ENCODE measurements at regions of chr15 and their contacts with region 1.

Region 1: DNA sequence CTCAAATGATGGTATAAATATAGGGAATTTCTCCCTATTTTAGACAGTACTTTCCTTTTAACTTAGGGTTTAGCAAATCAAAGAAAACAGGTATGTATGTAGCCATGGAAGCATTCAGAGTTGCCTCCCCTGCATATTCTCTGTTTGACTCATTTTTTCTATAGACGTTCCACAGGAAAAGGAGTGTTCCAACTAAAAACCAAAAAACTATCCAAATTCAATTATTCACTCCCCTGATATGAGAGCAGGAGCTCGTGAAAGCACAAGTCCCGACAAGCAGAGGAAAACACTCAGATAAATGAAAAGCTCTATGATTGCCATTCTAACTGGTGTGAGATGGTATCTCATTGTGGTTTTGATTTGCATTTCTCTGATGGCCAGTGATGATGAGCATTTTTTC is 119.5 kb downstream of the FRMD5 start:
- DNase-seq: no peak
- ATAC-seq: no peak
- H3K4me3 ChIP-seq: no peak overlapping the region
- H3K27ac ChIP-seq: no peak overlapping the region
- H3K4me1 ChIP-seq: no peaks in the 10 kb centered on the region
- H3K27me3 ChIP-seq: no peaks in the 10 kb centered on the region
- CTCF ChIP-seq: no peak
- POLR2A ChIP-seq: no peak

Region 2: DNA sequence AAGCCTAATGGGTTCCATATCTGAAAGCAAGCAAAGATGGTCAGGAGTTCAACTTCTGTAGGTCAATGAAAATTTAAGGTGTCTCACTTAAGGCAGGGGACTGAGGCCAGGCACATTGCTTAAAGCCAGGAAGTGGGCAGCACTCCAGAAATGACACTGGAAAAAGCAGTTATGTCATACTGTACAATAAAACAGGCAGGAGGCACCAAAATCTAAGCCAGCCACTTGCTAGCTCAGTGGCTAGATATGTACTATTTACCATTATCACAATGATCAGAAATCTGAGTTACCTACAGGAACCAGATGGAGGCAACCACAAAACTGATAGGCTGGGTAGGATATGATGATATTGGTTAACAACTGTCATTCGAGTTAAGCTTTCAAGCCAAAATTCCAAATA is 62.2 kb after region 1 on chr15:
- in situ Hi-C with region 1: no loop called
- intact Hi-C with region 1: loop called (anchors 10 kb)
- DNase-seq: no peak
- ATAC-seq: no peak
- H3K4me3 ChIP-seq: no peak overlapping the region
- H3K27ac ChIP-seq: no peak overlapping the region
- H3K4me1 ChIP-seq: no peaks in the 10 kb centered on the region
- H3K27me3 ChIP-seq: no peaks in the 10 kb centered on the region
- CTCF ChIP-seq: no peak
- POLR2A ChIP-seq: no peak

Measured in gastrocnemius medialis (tissue), 4 donors.